ENCODE measurements at regions of chr10 and their contacts with region 1.

Region 1: DNA sequence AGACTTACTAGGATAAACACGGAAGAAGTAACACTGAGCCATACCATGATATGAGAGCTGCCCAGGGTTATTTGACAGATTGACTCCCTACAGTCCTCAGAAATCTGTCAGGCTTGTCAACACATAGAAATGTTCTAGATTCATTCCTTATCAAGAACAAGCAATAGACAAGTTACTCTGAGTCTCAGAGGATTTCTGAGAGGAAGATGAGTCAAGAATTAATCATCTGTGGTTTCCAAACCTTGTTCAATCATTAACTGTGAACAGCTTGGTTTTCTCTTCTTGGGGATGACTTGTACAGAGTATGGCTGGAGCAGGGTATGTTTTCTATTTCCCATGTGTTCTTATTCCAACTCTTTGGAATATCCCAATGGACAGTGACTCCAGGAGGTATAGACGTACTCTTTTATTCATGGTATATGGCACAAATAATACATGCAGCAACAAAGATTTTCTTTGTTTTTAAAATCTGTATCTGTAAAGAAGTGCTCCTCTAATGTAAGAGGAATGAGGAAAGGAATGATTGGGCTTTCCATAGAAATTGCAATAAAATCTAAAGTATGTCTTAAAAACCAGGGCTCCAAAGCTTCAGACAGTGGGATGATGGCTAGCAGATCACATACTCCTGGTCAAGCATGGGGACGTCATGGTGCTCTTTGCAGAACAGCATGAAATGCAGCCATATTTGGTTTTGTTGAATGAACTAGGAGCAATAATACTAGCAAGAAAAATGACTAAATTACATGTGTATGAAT is 11.9 kb upstream of the SFR1 start:
- DNase-seq: peak; percentile 70
- H3K4me3 Mint-ChIP-seq: no peak overlapping the region
- H3K27ac Mint-ChIP-seq: peak overlapping the region; percentile 87
- H3K4me1 Mint-ChIP-seq: peaks cover 11% of the 10 kb centered on the region
- H3K27me3 Mint-ChIP-seq: no peaks in the 10 kb centered on the region
- CTCF ChIP-seq: no peak

Region 2: DNA sequence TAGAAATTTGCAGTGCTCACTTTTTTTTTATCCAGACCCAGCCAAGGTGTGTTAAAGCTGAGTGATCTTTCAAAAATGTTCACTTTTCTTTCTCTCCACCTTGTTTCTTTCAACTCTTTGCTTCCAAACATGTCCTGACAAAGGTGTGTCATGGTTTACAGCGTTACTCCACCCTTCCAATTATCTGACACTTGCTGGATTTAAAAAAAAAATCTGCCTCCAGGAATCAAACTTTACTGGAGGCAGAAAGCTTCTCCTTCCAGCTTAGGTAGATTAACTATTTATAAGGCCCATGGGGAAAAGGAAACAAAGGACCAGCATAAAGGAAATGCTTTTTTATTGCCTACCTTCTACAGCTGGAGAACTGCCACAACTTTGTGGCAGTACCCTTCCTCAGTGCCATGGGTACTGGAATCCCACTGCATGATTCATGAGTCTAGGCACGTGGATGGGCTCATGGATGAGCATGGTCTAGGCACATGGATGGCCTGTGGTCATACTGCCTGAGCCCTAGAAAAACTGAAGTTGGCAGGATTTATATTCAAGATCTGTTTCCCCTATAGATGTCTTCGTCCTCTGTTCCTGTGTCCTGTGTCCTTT is 24.2 kb before region 1 on chr10 and contains the start of gene COL17A1:
- CTCF ChIA-PET with region 1: interaction called, 8 read pairs
- POLR2A ChIA-PET with region 1: interaction called, 1,749 read pairs
- intact Hi-C with region 1: no loop called
- DNase-seq: peak; percentile 50
- H3K4me3 Mint-ChIP-seq: peak within 1 kb of the TSS; percentile 83
- H3K27ac Mint-ChIP-seq: peak within 1 kb of the TSS; percentile 97
- H3K4me1 Mint-ChIP-seq: peaks cover 42% of the 10 kb centered on the region
- H3K27me3 Mint-ChIP-seq: no peaks in the 10 kb centered on the region
- CTCF ChIP-seq: no peak
- total RNA-seq, gene COL17A1: 514 and 563 TPM in 2 replicates

Region 3: GRCh38 chr10:104099274-104099673 is 10.8 kb before region 1 on chr10:
- CTCF ChIA-PET with region 1: interaction called, 3 read pairs
- POLR2A ChIA-PET with region 1: interaction called, 1,749 read pairs
- intact Hi-C with region 1: no loop called
- DNase-seq: no peak
- H3K4me3 Mint-ChIP-seq: no peak overlapping the region
- H3K27ac Mint-ChIP-seq: no peak overlapping the region
- H3K4me1 Mint-ChIP-seq: peaks cover 6% of the 10 kb centered on the region
- H3K27me3 Mint-ChIP-seq: no peaks in the 10 kb centered on the region
- CTCF ChIP-seq: no peak

Region 4: DNA sequence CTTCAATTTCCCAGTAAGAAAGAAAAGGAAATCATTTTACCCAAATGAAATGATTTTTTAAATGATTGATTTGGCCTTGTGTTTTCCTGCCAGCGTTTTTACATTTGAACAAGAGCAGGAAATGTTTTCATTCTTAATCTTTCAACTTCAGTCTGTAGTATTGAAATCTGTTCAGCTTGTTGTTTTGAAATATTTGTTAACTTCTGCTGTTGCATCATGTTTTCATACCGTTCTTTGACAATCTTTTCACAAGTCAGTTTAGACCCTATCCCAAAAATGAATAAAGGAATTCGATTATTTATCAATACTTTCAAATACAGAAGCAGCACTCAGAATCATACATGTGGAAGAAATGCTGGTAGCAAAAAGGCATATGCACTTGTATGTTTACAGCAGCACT is 20.0 kb after region 1 on chr10:
- CTCF ChIA-PET with region 1: no interaction called
- POLR2A ChIA-PET with region 1: no interaction called
- intact Hi-C with region 1: no loop called
- DNase-seq: no peak
- H3K4me3 Mint-ChIP-seq: no peak overlapping the region
- H3K27ac Mint-ChIP-seq: no peak overlapping the region
- H3K4me1 Mint-ChIP-seq: no peaks in the 10 kb centered on the region
- H3K27me3 Mint-ChIP-seq: no peaks in the 10 kb centered on the region
- CTCF ChIP-seq: no peak

Region 5: DNA sequence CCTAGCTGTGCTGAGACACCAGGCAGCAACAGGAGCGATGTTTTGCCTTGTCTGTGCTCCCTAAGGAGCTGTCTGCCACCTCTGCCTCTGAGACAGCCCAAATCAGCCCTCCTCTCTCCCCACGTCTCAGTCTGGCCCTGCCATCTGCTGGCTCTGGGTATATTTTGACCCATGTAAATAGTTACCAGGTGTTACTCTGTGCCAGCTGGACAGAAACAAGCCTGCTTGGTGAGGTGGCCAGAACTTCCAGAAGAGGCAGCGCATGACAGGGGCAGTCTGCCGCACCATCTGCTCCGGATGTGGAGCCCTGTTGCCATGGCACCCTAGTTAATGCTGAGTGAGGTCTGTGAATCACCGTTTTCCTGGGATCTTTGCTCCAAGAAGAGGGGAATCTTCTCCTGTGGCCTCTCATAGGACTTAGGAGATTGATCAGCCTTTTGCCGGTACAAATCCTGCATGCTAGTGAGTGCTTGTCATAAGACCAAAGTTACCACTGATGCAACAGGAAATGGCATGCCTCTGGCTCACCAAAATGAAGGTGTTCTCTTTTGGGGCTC is 190.7 kb after region 1 on chr10:
- CTCF ChIA-PET with region 1: no interaction called
- POLR2A ChIA-PET with region 1: no interaction called
- intact Hi-C with region 1: no loop called
- DNase-seq: peak; percentile 90
- H3K4me3 Mint-ChIP-seq: no peak overlapping the region
- H3K27ac Mint-ChIP-seq: peak overlapping the region; percentile 93
- H3K4me1 Mint-ChIP-seq: peaks cover 34% of the 10 kb centered on the region
- H3K27me3 Mint-ChIP-seq: no peaks in the 10 kb centered on the region
- CTCF ChIP-seq: no peak